ENCODE measurements at regions of chr18 and their contacts with region 1.

Region 1: DNA sequence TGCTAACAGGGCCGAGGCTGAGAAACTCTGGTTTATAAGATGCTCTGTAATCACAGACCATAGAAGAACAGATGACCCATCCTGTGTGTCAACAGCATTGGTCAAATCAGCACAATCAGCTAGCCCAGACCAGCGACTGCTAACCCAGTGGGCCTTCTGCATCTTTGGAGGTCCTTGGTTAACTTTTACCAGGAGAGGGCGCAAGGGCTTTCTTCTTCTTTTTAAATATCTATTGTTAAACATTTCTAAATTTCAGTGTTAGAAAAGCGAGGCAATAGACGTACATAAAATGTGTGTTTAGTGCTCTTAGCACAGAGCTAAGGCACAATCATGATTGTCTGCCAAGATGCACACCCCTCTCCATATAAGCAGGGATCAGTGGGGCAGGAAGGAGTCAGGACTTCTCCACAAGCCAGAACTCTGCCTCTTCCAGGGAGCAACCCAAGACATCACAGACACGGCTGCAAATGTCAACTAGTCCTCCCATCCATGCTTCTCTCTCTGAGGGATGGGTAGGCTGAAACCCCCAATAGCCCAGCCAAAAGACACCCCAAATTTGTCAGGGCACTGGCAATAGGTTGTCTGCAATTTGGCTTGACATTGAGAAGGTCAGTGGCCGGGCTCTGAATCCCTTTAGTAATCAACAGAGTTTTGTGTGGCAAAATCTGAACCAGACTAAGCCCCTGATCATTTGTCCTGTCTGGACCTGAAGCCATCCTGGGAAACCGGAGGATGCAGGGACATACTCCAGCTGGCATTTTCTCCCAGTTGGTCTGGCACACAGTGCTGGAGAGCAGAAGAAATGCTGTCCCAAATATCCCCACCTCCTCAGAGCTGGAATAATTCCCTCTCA is 188.2 kb downstream of the BCL2 start:
- DNase-seq: peak; percentile 63 to 76 (median 70)
- H3K4me3 ChIP-seq: no peak overlapping the region
- H3K27ac ChIP-seq: no peak overlapping the region
- H3K4me1 ChIP-seq: peaks cover 0 to 24% (median 13%) of the 10 kb centered on the region in 4 experiments
- H3K27me3 ChIP-seq: no peaks in the 10 kb centered on the region

Region 2: DNA sequence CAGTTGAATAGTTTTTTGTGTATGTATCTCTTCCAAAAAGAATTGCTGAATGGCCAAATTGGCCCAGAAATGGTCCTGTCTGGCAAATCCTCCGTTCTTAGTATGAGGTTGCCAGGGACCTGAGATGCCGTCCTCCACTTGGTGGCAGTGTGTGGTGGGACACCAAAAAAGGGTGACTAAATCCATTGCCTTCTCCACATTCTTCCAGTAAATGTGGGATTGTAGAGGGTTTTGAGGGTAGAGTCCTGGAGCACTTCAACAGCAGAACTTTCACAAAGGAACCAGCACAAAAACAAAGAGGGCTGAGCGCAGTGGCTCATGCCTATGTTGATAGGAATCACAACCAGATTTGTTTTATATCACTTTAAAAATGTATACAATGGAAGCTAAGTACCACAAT is 11.7 kb before region 1 on chr18:
- CTCF ChIA-PET with region 1: interaction called, 15 read pairs
- POLR2A ChIA-PET with region 1: no interaction called
- DNase-seq: no peak
- H3K4me3 ChIP-seq: no peak overlapping the region
- H3K27ac ChIP-seq: no peak overlapping the region
- H3K4me1 ChIP-seq: peaks cover 0 to 5% (median 0%) of the 10 kb centered on the region in 4 experiments
- H3K27me3 ChIP-seq: no peaks in the 10 kb centered on the region

Region 3: DNA sequence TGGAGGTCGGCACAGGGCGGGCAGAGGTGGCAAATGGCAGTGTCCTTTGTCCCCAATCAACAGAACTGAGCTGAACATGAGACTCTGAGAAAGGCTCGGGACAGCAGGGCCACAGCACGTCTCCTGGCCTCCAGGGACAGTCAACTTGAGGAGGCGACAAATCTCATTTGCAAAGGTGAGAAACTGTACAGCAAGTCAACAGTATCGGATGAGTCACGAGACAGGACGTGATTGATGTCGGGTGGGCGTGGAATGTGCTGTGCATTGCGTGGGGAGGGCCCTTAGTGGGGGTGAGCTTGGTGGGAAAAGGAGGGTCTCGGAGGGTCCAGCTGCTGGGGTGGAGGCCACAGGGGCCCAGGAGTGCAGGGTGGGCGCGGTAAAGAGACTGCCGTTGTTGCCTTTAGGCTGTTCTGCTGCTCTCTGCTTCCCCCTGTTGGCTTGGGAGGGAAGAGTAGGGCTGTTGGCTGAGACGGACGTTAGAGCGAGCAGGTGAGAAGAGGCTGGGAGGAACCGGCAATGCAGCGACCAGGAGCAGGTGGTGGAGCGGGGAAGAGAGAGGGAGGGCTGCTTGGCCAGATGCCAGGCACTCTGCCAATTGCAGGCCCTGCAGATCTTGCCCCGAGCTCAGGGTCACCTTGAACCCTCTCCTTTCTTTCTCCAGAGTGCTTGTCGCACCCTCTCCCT is 24.0 kb after region 1 on chr18:
- CTCF ChIA-PET with region 1: interaction called, 122 read pairs
- POLR2A ChIA-PET with region 1: no interaction called
- DNase-seq: peak; percentile 71 to 81 (median 79)
- H3K4me3 ChIP-seq: peak overlapping the region in 4 of 7 experiments; percentile 30 to 71 (median 58)
- H3K27ac ChIP-seq: no peak overlapping the region
- H3K4me1 ChIP-seq: peaks cover 0 to 13% (median 5%) of the 10 kb centered on the region in 4 experiments
- H3K27me3 ChIP-seq: no peaks in the 10 kb centered on the region

Region 4: DNA sequence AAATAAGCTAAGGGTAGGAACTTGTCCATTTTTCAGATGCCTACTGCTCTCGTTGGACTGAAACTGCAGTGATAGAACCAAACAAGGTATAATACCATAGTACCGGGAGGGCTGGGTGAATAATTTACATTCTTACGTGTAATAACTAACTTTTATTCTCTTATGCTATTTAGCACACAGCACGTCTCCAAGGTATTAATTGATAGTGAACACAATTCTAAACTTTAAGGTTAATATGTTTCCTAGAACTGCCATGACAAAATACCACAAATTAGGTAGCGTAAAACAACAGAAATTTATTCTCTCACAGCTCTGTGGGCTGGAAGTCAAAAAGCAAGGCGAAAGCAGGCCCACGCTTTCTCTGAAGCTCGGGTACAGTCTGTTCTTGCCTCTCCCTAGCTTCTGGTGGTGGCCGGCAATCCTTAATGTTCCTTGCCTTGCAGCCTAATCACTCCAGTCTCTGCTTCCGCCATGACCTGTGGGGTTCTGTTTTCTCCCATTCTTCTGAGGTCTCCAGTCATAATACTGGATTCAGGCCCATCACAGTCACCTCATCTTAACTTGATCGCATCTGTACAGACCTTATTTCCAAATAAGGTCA is 193.9 kb after region 1 on chr18:
- CTCF ChIA-PET with region 1: interaction called, 37 read pairs
- POLR2A ChIA-PET with region 1: no interaction called
- DNase-seq: no peak
- H3K4me3 ChIP-seq: no peak overlapping the region
- H3K27ac ChIP-seq: no peak overlapping the region
- H3K4me1 ChIP-seq: peaks cover 0 to 22% (median 17%) of the 10 kb centered on the region in 4 experiments
- H3K27me3 ChIP-seq: no peaks in the 10 kb centered on the region

Region 5: GRCh38 chr18:63356272-63356896 is 225.1 kb after region 1 on chr18:
- CTCF ChIA-PET with region 1: no interaction called
- POLR2A ChIA-PET with region 1: no interaction called
- DNase-seq: no peak
- H3K4me3 ChIP-seq: no peak overlapping the region
- H3K27ac ChIP-seq: no peak overlapping the region
- H3K4me1 ChIP-seq: no peaks in the 10 kb centered on the region
- H3K27me3 ChIP-seq: no peaks in the 10 kb centered on the region

Measured in common myeloid progenitor, CD34-positive (primary cell).